Left cardiac atrium (tissue), 4 donors: ENCODE measurements at regions of chr21 and their contacts with region 1.

Region 1: GRCh38 chr21:16211339-16212303 is 481.8 kb downstream of the USP25 start:
- DNase-seq: no peak
- ATAC-seq: peak; percentile 47 to 64

Region 2: GRCh38 chr21:15928196-15928595 is 283.4 kb before region 1 on chr21:
- intact Hi-C with region 1: no loop called
- DNase-seq: no peak
- ATAC-seq: no peak

Region 3: GRCh38 chr21:16181024-16181423 is 30.6 kb before region 1 on chr21:
- intact Hi-C with region 1: no loop called
- DNase-seq: no peak
- ATAC-seq: peak in 1 of 2 donors; percentile 59

Region 4: DNA sequence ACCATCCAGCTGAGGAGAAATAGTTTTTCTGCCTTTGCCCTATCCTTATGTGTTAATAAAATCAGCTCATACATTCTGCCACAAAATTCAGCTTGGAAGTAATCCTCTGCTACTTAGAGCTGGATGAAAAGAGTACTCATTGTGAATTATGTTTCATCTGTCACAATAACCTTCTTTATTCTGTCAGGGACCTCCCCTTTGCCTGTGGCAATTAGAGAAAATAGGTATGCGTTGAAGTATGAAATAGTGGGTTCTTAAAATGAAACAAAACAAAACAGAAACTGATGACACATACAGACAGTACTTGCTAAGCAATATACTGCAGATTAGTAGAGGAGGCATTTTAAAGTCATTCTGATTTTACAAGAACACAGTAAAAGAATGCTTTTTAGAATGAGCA is 96.6 kb after region 1 on chr21:
- intact Hi-C with region 1: loop called in 1 of 2 experiments (anchors 10 kb)
- DNase-seq: no peak
- ATAC-seq: peak in 1 of 2 donors; percentile 25

Region 5: GRCh38 chr21:16330082-16330907 is 118.7 kb after region 1 on chr21:
- intact Hi-C with region 1: loop called in 1 of 2 experiments (anchors 10 kb)
- DNase-seq: no peak
- ATAC-seq: peak; percentile 96 to 98

Region 6: GRCh38 chr21:16437586-16437985 is 226.0 kb after region 1 on chr21:
- intact Hi-C with region 1: no loop called
- DNase-seq: no peak
- ATAC-seq: no peak